Common myeloid progenitor, CD34-positive (primary cell): ENCODE measurements at regions of chr11 and their contacts with region 1.

Region 1: GRCh38 chr11:64675450-64676260 is 47.3 kb downstream of the NRXN2 start:
- DNase-seq: peak in 2 of 3 donors; percentile 58 to 66
- H3K4me3 ChIP-seq: no peak overlapping the region
- H3K27ac ChIP-seq: no peak overlapping the region
- H3K4me1 ChIP-seq: peaks cover 0 to 27% (median 16%) of the 10 kb centered on the region in 4 experiments
- H3K27me3 ChIP-seq: peaks cover 0 to 4% (median 0%) of the 10 kb centered on the region in 5 experiments

Region 2: DNA sequence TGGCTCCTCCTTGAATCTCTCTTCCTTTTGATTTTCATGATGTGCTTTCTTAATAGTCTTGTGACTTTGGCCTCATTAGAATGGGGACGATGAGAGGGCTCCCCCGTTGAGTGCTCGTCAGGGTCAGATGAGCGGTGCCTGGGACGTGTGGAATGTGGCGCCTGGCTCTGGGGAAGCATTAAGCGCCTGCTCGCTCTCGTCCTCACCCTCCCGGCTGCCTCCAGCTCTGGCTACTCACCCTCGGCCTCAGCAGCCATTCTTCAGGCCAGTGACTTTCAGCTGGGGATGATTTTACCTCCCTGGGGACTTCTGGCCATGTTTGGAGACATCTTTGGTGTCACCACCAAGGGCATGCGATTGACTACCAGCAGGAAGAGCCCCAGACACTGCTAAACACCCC is 247.0 kb before region 1 on chr11:
- CTCF ChIA-PET with region 1: no interaction called
- POLR2A ChIA-PET with region 1: no interaction called
- DNase-seq: no peak
- H3K4me3 ChIP-seq: no peak overlapping the region
- H3K27ac ChIP-seq: no peak overlapping the region
- H3K4me1 ChIP-seq: no peaks in the 10 kb centered on the region
- H3K27me3 ChIP-seq: peaks cover 0 to 3% (median 0%) of the 10 kb centered on the region in 5 experiments

Region 3: DNA sequence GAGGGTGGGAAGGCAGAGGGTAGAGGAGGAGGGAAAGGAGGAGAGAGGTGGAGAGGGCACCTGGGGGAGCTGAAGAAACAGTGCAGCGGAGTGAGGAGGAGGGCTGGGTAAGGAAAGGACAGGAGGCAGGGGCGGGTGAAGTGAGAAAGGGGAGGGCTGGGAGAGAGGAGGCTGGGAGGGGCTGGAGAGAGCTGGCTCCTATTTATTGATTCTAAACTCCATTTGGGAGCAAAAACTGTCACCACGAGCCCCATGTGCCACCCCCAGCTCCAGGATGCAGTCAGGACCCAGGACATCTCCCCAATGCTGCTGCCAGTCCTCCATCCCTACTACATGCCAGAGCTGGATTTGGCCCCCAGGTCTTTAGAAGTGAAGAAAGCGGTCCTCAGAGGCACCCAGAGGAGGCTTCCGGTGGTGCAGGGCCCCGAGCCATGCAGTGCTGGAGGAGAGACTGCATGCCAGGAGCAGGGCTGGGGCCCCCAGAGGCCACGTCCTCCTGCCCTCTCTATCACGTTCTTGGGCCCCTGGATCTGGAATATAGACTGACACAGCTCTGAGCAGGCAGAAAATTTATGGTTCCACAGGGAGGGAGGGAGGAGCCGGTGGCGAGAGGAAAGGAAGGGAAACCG is 30.9 kb before region 1 on chr11:
- CTCF ChIA-PET with region 1: no interaction called
- POLR2A ChIA-PET with region 1: no interaction called
- DNase-seq: peak in 2 of 3 donors; percentile 50
- H3K4me3 ChIP-seq: no peak overlapping the region
- H3K27ac ChIP-seq: no peak overlapping the region
- H3K4me1 ChIP-seq: peaks cover 0 to 30% (median 16%) of the 10 kb centered on the region in 4 experiments
- H3K27me3 ChIP-seq: peaks cover 7 to 41% (median 18%) of the 10 kb centered on the region in 5 experiments

Region 4: DNA sequence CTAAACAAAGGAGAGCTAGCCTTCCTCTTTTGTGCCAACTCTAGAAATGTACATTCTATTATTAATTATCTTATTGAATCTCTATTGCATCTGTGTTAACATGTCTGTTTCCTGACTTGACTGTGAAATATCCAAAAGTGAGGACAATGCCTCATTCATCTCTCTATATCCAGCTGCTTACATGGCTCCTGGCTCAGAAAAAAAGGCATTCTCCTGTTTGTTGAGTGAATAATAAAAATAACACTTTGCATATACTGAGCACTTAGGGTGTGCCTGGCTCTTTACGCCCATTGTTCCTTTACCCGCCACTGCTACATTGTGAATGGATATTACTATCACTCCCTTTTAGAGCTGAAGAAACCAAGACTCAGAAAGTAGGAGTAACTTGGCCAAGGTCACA is 27.4 kb after region 1 on chr11:
- CTCF ChIA-PET with region 1: interaction called, 13 read pairs
- POLR2A ChIA-PET with region 1: no interaction called
- DNase-seq: no peak
- H3K4me3 ChIP-seq: no peak overlapping the region
- H3K27ac ChIP-seq: no peak overlapping the region
- H3K4me1 ChIP-seq: no peaks in the 10 kb centered on the region
- H3K27me3 ChIP-seq: peaks cover 0 to 6% (median 0%) of the 10 kb centered on the region in 5 experiments

Region 5: GRCh38 chr11:64803163-64803845 is 127.6 kb after region 1 on chr11 and contains the start of gene MAP4K2:
- CTCF ChIA-PET with region 1: no interaction called
- POLR2A ChIA-PET with region 1: no interaction called
- DNase-seq: peak; percentile 77 to 82 (median 79)
- H3K4me3 ChIP-seq: peak within 1 kb of the TSS; percentile 64 to 91 (median 80)
- H3K27ac ChIP-seq: peak within 1 kb of the TSS; percentile 58 to 86
- H3K4me1 ChIP-seq: peaks cover 0 to 55% (median 49%) of the 10 kb centered on the region in 4 experiments
- H3K27me3 ChIP-seq: no peaks in the 10 kb centered on the region

Region 6: DNA sequence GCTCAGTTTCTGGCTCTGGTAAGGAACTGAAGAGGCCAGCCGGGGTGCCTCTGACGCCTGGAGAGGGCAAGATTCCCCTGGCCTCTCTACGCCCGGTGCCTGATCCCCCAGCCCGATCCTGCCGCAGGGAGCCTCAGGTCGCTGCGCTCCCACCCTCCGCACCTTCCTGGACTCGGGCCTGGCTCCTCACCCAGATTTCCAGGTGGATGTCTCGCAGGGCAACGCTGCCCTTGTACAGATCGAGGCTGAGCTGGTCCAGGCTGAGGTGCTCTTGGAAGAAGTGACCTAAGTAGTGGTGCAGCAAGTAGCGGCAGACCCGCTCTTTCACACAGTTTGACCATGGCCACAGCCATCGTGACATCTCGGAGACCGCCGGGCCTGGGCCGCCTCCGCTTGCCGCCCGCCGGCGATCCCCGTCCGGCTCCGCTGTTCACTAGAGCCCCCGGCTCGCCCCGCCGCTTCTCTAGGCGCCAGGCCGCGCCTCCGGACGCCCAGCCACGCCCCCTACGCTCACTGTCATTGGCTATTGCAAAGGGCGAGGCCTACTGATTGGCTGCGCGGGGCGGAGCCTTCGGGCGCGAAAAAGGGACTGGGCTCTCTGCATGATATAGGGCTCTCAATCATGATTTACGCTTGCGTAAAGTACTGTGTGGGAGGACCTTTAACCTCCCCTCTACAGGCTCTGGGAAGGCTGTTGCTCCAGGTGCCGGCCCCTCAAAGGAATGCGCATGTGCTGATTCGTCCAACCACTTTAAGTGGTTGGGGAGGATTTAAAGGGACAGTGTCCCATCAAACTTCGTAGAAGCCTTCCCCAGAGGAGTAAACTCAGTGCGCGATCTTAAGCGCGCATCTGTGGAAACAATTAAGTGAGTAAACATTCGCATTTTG is 241.4 kb after region 1 on chr11 and contains the start of gene ATG2A:
- CTCF ChIA-PET with region 1: no interaction called
- POLR2A ChIA-PET with region 1: no interaction called
- DNase-seq: peak; percentile 99 to 100 (median 100)
- H3K4me3 ChIP-seq: peak within 1 kb of the TSS; percentile 77 to 99 (median 92)
- H3K27ac ChIP-seq: peak within 1 kb of the TSS; percentile 79 to 92
- H3K4me1 ChIP-seq: peaks cover 6 to 38% (median 27%) of the 10 kb centered on the region in 4 experiments
- H3K27me3 ChIP-seq: no peaks in the 10 kb centered on the region